ENCODE measurements at regions of chr5 and their contacts with region 1.

Region 1: GRCh38 chr5:10353241-10354047 is at the start of gene MARCHF6:
- DNase-seq: peak; percentile 95 to 99 (median 96)
- ATAC-seq: peak; percentile 86
- H3K4me3 ChIP-seq: peak within 1 kb of the TSS; percentile 87
- H3K4me3 Mint-ChIP-seq: peak within 1 kb of the TSS; percentile 99
- H3K27ac ChIP-seq: peak within 1 kb of the TSS; percentile 89 to 93
- H3K27ac Mint-ChIP-seq: peak within 1 kb of the TSS; percentile 97
- H3K4me1 ChIP-seq: peaks cover 25% of the 10 kb centered on the region
- H3K4me1 Mint-ChIP-seq: peaks cover 58% of the 10 kb centered on the region
- H3K27me3 ChIP-seq: no peaks in the 10 kb centered on the region
- H3K27me3 Mint-ChIP-seq: no peaks in the 10 kb centered on the region
- CTCF ChIP-seq: no peak
- total RNA-seq, gene MARCHF6: 176 to 182 TPM

Region 2: GRCh38 chr5:10249948-10250803 is 103.3 kb before region 1 on chr5 and contains the start of gene CCT5:
- CTCF ChIA-PET with region 1: no interaction called
- POLR2A ChIA-PET with region 1: interaction called, 56 read pairs
- intact Hi-C with region 1: loop called (anchors 1 to 2 kb)
- DNase-seq: peak; percentile 76 to 98 (median 88)
- ATAC-seq: peak; percentile 81
- H3K4me3 ChIP-seq: peak within 1 kb of the TSS; percentile 95
- H3K4me3 Mint-ChIP-seq: peak within 1 kb of the TSS; percentile 98
- H3K27ac ChIP-seq: peak within 1 kb of the TSS; percentile 84 to 100
- H3K27ac Mint-ChIP-seq: peak within 1 kb of the TSS; percentile 99
- H3K4me1 ChIP-seq: peaks cover 43% of the 10 kb centered on the region
- H3K4me1 Mint-ChIP-seq: peaks cover 60% of the 10 kb centered on the region
- H3K27me3 ChIP-seq: no peaks in the 10 kb centered on the region
- H3K27me3 Mint-ChIP-seq: no peaks in the 10 kb centered on the region
- CTCF ChIP-seq: no peak
- total RNA-seq, gene CCT5: 27.4 to 32.0 TPM

Region 3: DNA sequence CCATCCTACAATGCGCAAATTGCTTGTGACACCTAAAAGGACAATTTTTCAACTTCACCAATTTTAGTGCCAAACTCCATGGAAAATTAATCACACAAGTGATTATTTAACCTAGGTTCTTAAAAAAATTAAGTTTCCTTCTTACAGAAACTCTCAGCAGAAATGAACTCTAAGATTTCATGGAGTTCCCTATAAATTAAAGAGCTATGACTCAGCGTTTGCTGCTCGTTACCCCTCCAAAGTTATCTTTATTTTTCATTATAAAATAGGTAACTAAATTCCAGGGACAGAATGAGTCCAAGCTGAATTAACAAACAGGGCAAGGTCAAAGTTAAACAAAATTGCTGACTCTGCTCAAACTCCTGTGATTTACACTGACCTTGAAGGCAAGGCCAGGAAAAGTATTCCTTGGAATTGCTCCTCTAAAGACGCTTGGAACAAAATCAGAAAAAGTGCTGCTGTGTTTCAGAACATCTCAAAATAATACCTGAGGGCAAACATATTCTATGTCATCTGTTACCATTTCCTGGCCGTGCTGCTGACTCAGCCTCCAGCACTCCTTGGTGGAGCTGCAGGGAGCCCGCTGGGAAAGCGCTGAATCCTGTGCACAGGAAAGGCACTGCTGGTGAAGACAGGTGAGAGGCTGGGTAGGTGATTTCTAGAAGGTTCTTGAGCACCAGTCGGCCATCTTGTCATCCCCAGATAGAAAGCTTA is 43.2 kb before region 1 on chr5:
- CTCF ChIA-PET with region 1: no interaction called
- POLR2A ChIA-PET with region 1: no interaction called
- intact Hi-C with region 1: no loop called
- DNase-seq: no peak
- ATAC-seq: no peak
- H3K4me3 ChIP-seq: no peak overlapping the region
- H3K4me3 Mint-ChIP-seq: no peak overlapping the region
- H3K27ac ChIP-seq: no peak overlapping the region
- H3K27ac Mint-ChIP-seq: no peak overlapping the region
- H3K4me1 ChIP-seq: peaks cover 4% of the 10 kb centered on the region
- H3K4me1 Mint-ChIP-seq: peaks cover 6% of the 10 kb centered on the region
- H3K27me3 ChIP-seq: peaks cover 11 to 18% of the 10 kb centered on the region in 2 experiments
- H3K27me3 Mint-ChIP-seq: peaks cover 18% of the 10 kb centered on the region
- CTCF ChIP-seq: no peak

Region 4: DNA sequence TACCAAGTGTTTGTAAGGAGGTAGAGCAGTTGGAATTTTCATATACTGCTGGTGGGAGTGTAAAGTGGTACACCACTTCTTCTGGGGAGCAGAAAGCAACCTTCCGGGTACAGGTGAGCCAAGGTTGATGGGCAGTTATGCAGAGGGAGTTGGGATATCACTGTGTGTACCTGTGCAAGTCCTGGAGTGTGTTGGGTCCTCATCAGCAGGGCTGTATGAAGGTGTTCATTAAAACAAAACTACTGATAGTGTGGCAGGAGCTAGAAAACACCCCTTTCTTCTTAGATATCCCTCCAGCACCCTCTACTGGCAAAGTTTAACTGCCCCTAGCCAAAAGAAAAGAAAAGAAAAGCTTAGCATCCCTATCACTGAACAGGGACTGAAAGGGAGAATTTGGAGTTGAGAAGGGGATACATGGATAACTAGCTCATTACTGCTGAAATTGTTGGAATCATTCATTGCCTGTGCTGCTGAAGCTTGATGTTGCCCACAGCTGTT is 10.8 kb after region 1 on chr5:
- CTCF ChIA-PET with region 1: interaction called, 9 read pairs
- POLR2A ChIA-PET with region 1: interaction called, 7 read pairs
- intact Hi-C with region 1: loop called in 1 of 2 experiments (anchors 2 kb)
- DNase-seq: peak in 3 of 14 experiments; percentile 30 to 63 (median 57)
- ATAC-seq: peak; percentile 55
- H3K4me3 ChIP-seq: no peak overlapping the region
- H3K4me3 Mint-ChIP-seq: peak overlapping the region; percentile 31
- H3K27ac ChIP-seq: no peak overlapping the region
- H3K27ac Mint-ChIP-seq: no peak overlapping the region
- H3K4me1 ChIP-seq: peaks cover 34% of the 10 kb centered on the region
- H3K4me1 Mint-ChIP-seq: peaks cover 80% of the 10 kb centered on the region
- H3K27me3 ChIP-seq: no peaks in the 10 kb centered on the region
- H3K27me3 Mint-ChIP-seq: no peaks in the 10 kb centered on the region
- CTCF ChIP-seq: no peak

Region 5: DNA sequence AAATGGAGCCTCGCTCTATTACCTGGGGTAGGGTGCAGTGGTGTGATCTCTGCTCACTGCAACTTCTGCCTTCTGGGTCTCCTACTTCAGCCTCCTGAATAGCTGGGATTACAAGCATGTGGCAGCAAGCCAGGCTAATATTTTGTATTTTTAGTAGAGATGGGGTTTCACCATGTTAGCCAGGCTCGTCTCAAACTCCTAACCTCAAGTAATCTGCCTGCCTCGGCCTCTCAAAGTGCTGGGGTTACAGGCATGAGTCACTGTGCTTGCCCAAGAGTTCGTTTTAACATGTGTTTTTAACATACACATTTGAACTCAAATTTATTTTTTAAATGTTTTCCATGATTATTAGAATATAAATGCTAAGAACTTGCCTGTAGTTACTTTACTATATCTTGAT is 34.2 kb after region 1 on chr5:
- CTCF ChIA-PET with region 1: no interaction called
- POLR2A ChIA-PET with region 1: no interaction called
- intact Hi-C with region 1: loop called in 1 of 2 experiments (anchors 5 kb)
- DNase-seq: no peak
- ATAC-seq: no peak
- H3K4me3 ChIP-seq: no peak overlapping the region
- H3K4me3 Mint-ChIP-seq: no peak overlapping the region
- H3K27ac ChIP-seq: no peak overlapping the region
- H3K27ac Mint-ChIP-seq: no peak overlapping the region
- H3K4me1 ChIP-seq: no peaks in the 10 kb centered on the region
- H3K4me1 Mint-ChIP-seq: peaks cover 14% of the 10 kb centered on the region
- H3K27me3 ChIP-seq: no peaks in the 10 kb centered on the region
- H3K27me3 Mint-ChIP-seq: no peaks in the 10 kb centered on the region
- CTCF ChIP-seq: no peak

Region 6: GRCh38 chr5:10441083-10441991 is 87.9 kb after region 1 on chr5 and contains the start of gene ROPN1L:
- CTCF ChIA-PET with region 1: no interaction called
- POLR2A ChIA-PET with region 1: interaction called, 9 read pairs
- intact Hi-C with region 1: loop called in 1 of 2 experiments (anchors 2 kb)
- DNase-seq: peak; percentile 56 to 90 (median 75)
- ATAC-seq: peak; percentile 93
- H3K4me3 ChIP-seq: peak within 1 kb of the TSS; percentile 84
- H3K4me3 Mint-ChIP-seq: peak within 1 kb of the TSS; percentile 87
- H3K27ac ChIP-seq: no peak within 1 kb of the TSS
- H3K27ac Mint-ChIP-seq: no peak within 1 kb of the TSS
- H3K4me1 ChIP-seq: peaks cover 53% of the 10 kb centered on the region
- H3K4me1 Mint-ChIP-seq: peaks cover 60% of the 10 kb centered on the region
- H3K27me3 ChIP-seq: no peaks in the 10 kb centered on the region
- H3K27me3 Mint-ChIP-seq: no peaks in the 10 kb centered on the region
- CTCF ChIP-seq: no peak
- total RNA-seq, gene ROPN1L: 0.42 to 0.58 TPM

Measured in CD4-positive, alpha-beta T cell (primary cell).